Astrocyte of the cerebellum (primary cell): ENCODE measurements at regions of chr6 and their contacts with region 1.

Region 1: GRCh38 chr6:83169511-83169910 is 23.6 kb downstream of the PGM3 start:
- DNase-seq: no peak
- H3K4me3 ChIP-seq: no peak overlapping the region
- CTCF ChIP-seq: no peak

Region 2: DNA sequence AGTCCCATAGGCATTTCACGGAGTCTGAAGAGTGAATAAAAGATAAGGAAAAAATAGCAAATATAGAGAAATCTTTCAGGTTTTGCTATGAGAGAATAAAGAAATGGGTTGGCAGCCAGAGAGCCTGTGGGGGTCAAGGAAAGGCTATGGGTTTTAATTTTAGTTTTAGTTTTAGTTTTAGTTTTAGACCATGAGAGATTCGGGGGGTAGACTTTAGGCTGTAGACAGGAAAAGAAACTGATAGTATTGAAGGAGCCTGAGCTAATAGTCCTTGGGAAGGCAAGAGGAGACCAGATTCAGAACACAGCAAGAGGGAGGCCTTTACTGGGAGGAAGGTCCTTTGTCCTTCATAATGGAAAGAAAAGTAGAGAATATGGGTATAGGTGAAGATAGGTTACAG is 82.8 kb before region 1 on chr6:
- in situ Hi-C with region 1: no loop called
- DNase-seq: no peak
- H3K4me3 ChIP-seq: no peak overlapping the region
- CTCF ChIP-seq: no peak

Region 3: GRCh38 chr6:83132121-83132520 is 37.4 kb before region 1 on chr6:
- in situ Hi-C with region 1: loop called (anchors 5 kb)
- DNase-seq: no peak
- H3K4me3 ChIP-seq: no peak overlapping the region
- CTCF ChIP-seq: no peak

Region 4: GRCh38 chr6:83574787-83575186 is 405.3 kb after region 1 on chr6:
- in situ Hi-C with region 1: no loop called
- DNase-seq: no peak
- H3K4me3 ChIP-seq: no peak overlapping the region
- CTCF ChIP-seq: no peak